PC-3 (cell line): ENCODE measurements at regions of chr6 and their contacts with region 1.

Region 1: GRCh38 chr6:105317607-105318533 is 85.0 kb downstream of the PREP start:
- DNase-seq: peak; percentile 61
- ATAC-seq: peak; percentile 72
- H3K4me3 ChIP-seq: peak overlapping the region; percentile 30; the same call in 1 of the 2 replicates
- H3K27ac ChIP-seq: peak overlapping the region; percentile 90
- H3K4me1 ChIP-seq: peaks cover 33% of the 10 kb centered on the region
- H3K27me3 ChIP-seq: no peaks in the 10 kb centered on the region
- CTCF ChIP-seq: peak; percentile 74

Region 2: DNA sequence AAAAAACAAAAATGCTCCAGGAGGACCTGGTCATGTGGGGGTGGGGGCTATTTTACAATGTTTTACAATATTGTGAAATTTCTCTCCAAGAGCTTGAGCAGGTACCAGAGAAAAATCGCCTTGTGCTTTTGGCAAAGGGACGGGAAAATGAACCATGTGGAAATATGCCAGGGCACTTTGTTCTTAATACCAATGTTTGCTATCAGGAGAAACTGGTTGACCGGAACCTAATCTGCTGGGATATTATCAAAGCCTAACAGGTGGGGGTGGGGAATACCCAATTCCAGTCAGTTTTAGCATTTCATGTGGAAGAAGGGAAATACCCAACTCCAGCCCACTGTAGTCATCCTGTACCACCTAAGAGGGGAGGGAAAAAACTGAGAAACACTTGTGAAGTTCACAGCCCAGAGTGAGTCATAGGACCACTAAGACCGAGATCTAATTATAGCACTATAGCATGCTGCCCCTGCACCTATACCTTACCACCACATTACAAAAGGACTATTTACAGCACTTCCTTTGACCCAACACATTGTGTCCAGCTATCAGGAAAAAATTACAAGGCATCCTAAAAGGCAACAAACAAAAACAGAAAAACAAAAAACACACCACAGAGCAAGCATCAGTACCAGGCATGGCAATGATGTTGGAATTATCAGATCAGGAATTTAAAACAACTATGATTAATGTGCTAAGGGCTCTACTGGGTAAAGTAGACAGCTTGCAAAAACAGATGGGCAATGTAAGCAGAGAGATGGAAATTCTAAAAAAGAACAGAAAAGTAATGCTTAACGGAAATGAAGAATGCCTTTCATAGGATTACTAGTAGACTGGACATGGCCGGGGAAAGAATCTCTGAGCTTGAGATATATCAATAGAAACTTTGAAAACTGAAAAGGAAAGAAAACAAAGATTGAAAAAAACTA is 53.9 kb before region 1 on chr6:
- CTCF ChIA-PET with region 1: no interaction called
- POLR2A ChIA-PET with region 1: no interaction called
- intact Hi-C with region 1: no loop called
- DNase-seq: no peak
- ATAC-seq: no peak
- H3K4me3 ChIP-seq: no peak overlapping the region
- H3K27ac ChIP-seq: no peak overlapping the region
- H3K4me1 ChIP-seq: no peaks in the 10 kb centered on the region
- H3K27me3 ChIP-seq: no peaks in the 10 kb centered on the region
- CTCF ChIP-seq: no peak

Region 3: GRCh38 chr6:105363100-105363754 is 45.4 kb after region 1 on chr6:
- CTCF ChIA-PET with region 1: interaction called, 13 read pairs
- POLR2A ChIA-PET with region 1: no interaction called
- intact Hi-C with region 1: loop called (anchors 1 kb)
- DNase-seq: peak; percentile 52
- ATAC-seq: no peak
- H3K4me3 ChIP-seq: no peak overlapping the region
- H3K27ac ChIP-seq: no peak overlapping the region
- H3K4me1 ChIP-seq: peaks cover 17% of the 10 kb centered on the region
- H3K27me3 ChIP-seq: no peaks in the 10 kb centered on the region
- CTCF ChIP-seq: peak; percentile 62